WTC11 (cell line): ENCODE measurements at regions of chr19 and their contacts with region 1.

Region 1: GRCh38 chr19:2261438-2262172 is 5.4 kb upstream of the JSRP1 start:
- DNase-seq: peak; percentile 74
- ATAC-seq: peak; percentile 68
- H3K4me3 Mint-ChIP-seq: no peak overlapping the region
- H3K27ac Mint-ChIP-seq: no peak overlapping the region
- H3K4me1 Mint-ChIP-seq: 0 out of 2 replicates have a peak, but pooled peaks cover 2% of the 10 kb centered on the region
- H3K27me3 Mint-ChIP-seq: peaks cover 4% of the 10 kb centered on the region; the same call in 1 of the 2 replicates
- CTCF ChIP-seq: peak; percentile 75; the same call in 1 of the 2 replicates

Region 2: GRCh38 chr19:2236314-2237050 is 25.1 kb before region 1 on chr19 and contains the starts of genes PLEKHJ1 and SF3A2:
- CTCF ChIA-PET with region 1: interaction called, 25 read pairs
- POLR2A ChIA-PET with region 1: no interaction called
- DNase-seq: peak; percentile 97
- ATAC-seq: peak; percentile 83
- H3K4me3 Mint-ChIP-seq: peak within 1 kb of the TSS; percentile 93
- H3K27ac Mint-ChIP-seq: peak within 1 kb of the TSS; percentile 99
- H3K4me1 Mint-ChIP-seq: peaks cover 42% of the 10 kb centered on the region
- H3K27me3 Mint-ChIP-seq: peaks cover 5% of the 10 kb centered on the region; the same call in 1 of the 2 replicates
- CTCF ChIP-seq: peak; percentile 83
- total RNA-seq, gene PLEKHJ1: 164 to 189 TPM (median 167 TPM) in 3 replicates
- total RNA-seq, gene SF3A2: 167 to 184 TPM (median 169 TPM) in 3 replicates

Region 3: GRCh38 chr19:2289714-2290435 is 28.3 kb after region 1 on chr19:
- CTCF ChIA-PET with region 1: interaction called, 10 read pairs
- POLR2A ChIA-PET with region 1: no interaction called
- DNase-seq: no peak
- ATAC-seq: no peak
- H3K4me3 Mint-ChIP-seq: peak overlapping the region; percentile 63
- H3K27ac Mint-ChIP-seq: no peak overlapping the region
- H3K4me1 Mint-ChIP-seq: peaks cover 9% of the 10 kb centered on the region; the same call in 1 of the 2 replicates
- H3K27me3 Mint-ChIP-seq: peaks cover 74% of the 10 kb centered on the region
- CTCF ChIP-seq: no peak